OCI-LY7 (cell line): ENCODE measurements at regions of chr14 and their contacts with region 1.

Region 1: DNA sequence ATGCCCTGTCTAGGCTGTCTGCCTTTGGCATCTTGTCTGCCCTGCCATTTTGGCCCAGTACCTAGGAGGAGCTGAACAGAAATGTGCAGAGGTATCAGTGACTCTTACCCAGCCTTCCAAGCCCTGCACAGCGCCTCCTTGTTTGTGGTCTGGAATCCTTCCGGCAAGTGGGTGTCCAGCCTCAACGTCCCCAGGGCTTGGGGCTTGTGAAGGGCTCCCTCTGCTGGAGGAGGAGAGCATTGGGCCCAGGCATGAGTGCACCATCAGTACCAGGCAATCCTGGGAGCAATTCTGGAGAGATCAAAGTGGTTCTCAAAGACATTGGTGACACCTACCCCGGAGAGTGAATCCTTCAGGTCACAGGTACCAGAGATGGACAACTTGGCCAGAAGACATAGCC is 2.4 kb upstream of the TCL1B start:
- DNase-seq: peak; percentile 69
- H3K4me3 ChIP-seq: no peak overlapping the region
- H3K27ac ChIP-seq: no peak overlapping the region
- H3K4me1 ChIP-seq: peaks cover 72% of the 10 kb centered on the region
- CTCF ChIP-seq: peak; percentile 98

Region 2: GRCh38 chr14:95609387-95609990 is 74.3 kb before region 1 on chr14:
- CTCF ChIA-PET with region 1: interaction called, 3 read pairs
- POLR2A ChIA-PET with region 1: interaction called, 4 read pairs
- intact Hi-C with region 1: loop called (anchors 1 kb)
- DNase-seq: peak; percentile 81
- H3K4me3 ChIP-seq: no peak overlapping the region
- H3K27ac ChIP-seq: no peak overlapping the region
- H3K4me1 ChIP-seq: peaks cover 26% of the 10 kb centered on the region
- CTCF ChIP-seq: peak; percentile 97

Region 3: GRCh38 chr14:95668235-95668772 is 15.5 kb before region 1 on chr14:
- CTCF ChIA-PET with region 1: interaction called, 26 read pairs
- POLR2A ChIA-PET with region 1: interaction called, 235 read pairs
- intact Hi-C with region 1: no loop called
- DNase-seq: peak; percentile 46
- H3K4me3 ChIP-seq: no peak overlapping the region
- H3K27ac ChIP-seq: peak overlapping the region; percentile 98
- H3K4me1 ChIP-seq: peaks cover 87% of the 10 kb centered on the region
- CTCF ChIP-seq: no peak

Region 4: DNA sequence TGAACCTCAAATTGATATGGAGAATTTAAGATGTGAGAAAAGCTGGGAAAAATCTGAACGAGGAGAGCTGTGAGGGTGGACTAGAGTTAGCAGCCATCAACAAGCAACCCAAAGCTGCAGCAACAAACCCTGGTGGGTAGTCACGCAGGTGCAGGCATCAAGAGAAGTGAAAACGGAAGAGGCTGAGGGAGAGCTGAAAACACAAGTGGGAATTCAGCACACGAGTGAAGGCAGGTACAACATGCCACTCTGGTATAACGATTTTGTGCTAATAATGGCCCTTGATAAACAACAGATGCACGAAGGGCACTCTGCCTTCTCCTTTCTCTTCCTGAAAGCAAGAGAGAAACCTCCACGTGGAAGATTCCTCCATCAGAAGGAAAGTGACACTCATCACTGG is 14.0 kb after region 1 on chr14:
- CTCF ChIA-PET with region 1: interaction called, 5 read pairs
- POLR2A ChIA-PET with region 1: interaction called, 11 read pairs
- intact Hi-C with region 1: no loop called
- DNase-seq: peak; percentile 94
- H3K4me3 ChIP-seq: peak overlapping the region; percentile 49
- H3K27ac ChIP-seq: peak overlapping the region; percentile 100
- H3K4me1 ChIP-seq: peaks cover 97% of the 10 kb centered on the region
- CTCF ChIP-seq: no peak

Region 5: DNA sequence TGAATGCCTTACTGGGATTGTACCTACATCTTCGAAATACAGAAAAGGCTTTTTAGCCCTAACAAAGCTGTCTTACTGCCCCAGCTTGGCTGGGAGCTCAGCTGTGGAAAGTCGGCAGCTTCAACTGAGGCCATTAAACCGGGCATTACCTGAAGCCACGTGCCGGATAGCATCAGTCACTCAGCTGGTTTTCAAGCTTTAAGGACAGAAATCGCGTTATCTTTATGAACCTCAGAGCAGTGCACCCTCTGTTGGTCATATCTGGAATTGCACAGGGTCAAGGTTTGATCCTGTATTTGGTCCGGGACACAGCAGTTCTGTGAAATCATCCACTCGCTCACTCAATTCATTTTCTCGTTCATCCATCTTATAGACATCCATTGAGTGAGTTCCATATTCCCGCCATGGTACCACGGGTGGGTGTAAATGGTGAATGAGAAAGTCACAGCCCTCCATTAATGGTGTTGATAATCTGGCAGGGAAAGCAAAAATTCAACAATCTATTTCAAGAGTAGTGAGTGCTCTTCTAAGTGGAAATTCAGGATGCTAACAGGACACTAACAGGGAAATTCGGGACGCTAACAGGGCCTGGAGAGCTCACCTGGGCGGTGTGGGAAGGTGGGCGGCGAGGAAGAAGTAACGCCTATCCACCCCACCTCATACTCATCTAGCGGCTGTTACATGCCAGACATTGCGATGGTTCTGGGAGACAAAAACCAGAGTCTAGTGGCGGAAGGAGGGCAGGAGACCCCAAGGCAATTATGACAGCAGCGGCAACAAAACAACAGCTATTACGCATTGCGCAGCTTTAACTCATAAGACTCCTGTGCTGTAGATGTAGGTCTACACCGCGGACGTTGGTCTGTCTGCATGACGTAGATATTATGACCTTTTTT is 90.7 kb after region 1 on chr14:
- CTCF ChIA-PET with region 1: no interaction called
- POLR2A ChIA-PET with region 1: no interaction called
- intact Hi-C with region 1: loop called (anchors 1 kb)
- DNase-seq: peak; percentile 86
- H3K4me3 ChIP-seq: no peak overlapping the region
- H3K27ac ChIP-seq: no peak overlapping the region
- H3K4me1 ChIP-seq: peaks cover 6% of the 10 kb centered on the region
- CTCF ChIP-seq: peak; percentile 98

Region 6: GRCh38 chr14:96038920-96039632 is 355.3 kb after region 1 on chr14 and contains the start of gene C14orf132:
- CTCF ChIA-PET with region 1: no interaction called
- POLR2A ChIA-PET with region 1: no interaction called
- intact Hi-C with region 1: no loop called
- DNase-seq: no peak
- H3K4me3 ChIP-seq: no peak within 1 kb of the TSS
- H3K27ac ChIP-seq: no peak within 1 kb of the TSS
- H3K4me1 ChIP-seq: no peaks in the 10 kb centered on the region
- CTCF ChIP-seq: no peak
- total RNA-seq, gene C14orf132: 0.03 TPM in 1 of 2 replicates, not detected in the other